ENCODE measurements at regions of chr10 and their contacts with region 1.

Region 1: DNA sequence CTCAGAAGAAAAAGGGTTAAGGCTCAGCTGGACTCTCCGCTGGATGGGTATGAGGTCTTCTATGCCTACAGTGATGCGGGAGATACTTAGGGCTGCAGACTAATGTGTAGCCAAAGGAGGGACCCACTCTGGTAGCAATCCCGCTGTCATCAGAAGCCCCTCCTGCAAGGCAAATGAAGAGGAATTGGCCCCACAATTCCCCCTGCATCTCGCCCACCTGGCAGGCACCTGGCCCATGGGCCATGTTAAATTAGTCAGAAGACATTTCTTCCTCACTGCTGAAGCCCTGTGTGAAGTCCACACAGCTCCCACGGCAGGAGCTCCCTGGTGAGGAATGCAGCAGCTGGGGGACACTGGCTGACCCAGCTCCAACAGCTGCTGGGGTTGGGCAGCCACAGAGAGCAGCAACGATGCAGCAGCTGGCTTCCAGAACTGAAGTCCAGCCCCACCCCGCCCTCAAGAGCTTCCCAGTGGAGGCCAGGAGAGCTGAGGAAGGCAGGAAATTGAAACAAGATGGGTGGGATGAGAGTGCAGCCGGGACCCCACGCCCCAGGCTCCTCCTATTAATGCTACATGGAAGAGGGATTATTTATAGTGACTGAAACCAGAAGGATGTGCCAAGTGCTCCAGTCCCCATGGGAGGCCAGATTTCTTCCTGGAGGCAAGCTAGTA is 5.5 kb downstream of the VSTM4 start:
- DNase-seq: peak; percentile 78 to 90 (median 87)
- ATAC-seq: peak; percentile 71 to 82
- H3K4me3 ChIP-seq: no peak overlapping the region
- H3K27ac ChIP-seq: peak overlapping the region; percentile 22
- H3K4me1 ChIP-seq: peaks cover 23% of the 10 kb centered on the region
- H3K27me3 ChIP-seq: no peaks in the 10 kb centered on the region

Region 2: DNA sequence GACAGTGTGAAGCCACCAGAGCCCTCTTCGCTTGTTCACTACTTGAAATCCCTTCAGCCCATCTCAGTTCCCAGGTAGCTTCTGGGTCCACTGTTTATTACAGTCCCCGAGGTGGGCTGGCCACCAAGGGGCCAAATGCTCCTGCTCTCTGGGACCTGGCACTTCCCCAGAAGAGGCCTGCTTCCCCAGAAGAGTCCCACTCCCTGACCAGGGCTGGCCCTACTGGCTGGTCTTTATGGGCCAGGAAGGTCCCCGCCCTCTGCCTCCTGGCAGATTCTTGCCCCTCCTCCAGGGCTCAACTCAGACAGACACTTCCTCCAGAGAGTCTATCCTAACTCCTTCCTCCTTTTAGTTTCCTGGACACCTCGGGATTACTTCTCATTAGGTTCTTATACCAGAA is 99.5 kb before region 1 on chr10:
- intact Hi-C with region 1: loop called in 3 of 4 experiments (anchors 10 kb)
- DNase-seq: peak in 2 of 3 donors; percentile 37 to 71
- ATAC-seq: peak; percentile 34 to 45
- H3K4me3 ChIP-seq: no peak overlapping the region
- H3K27ac ChIP-seq: no peak overlapping the region
- H3K4me1 ChIP-seq: peaks cover 12% of the 10 kb centered on the region
- H3K27me3 ChIP-seq: no peaks in the 10 kb centered on the region

Measured in right cardiac atrium (tissue), 5 donors.